Activated CD4-positive, alpha-beta T cell treated with anti-CD3 and anti-CD28 coated beads, Interleukin-2, amount 10 ng/mL, durations not matched to agents 7 days and 5 days (primary cell): ENCODE measurements at regions of chr2 and their contacts with region 1.

Region 1: DNA sequence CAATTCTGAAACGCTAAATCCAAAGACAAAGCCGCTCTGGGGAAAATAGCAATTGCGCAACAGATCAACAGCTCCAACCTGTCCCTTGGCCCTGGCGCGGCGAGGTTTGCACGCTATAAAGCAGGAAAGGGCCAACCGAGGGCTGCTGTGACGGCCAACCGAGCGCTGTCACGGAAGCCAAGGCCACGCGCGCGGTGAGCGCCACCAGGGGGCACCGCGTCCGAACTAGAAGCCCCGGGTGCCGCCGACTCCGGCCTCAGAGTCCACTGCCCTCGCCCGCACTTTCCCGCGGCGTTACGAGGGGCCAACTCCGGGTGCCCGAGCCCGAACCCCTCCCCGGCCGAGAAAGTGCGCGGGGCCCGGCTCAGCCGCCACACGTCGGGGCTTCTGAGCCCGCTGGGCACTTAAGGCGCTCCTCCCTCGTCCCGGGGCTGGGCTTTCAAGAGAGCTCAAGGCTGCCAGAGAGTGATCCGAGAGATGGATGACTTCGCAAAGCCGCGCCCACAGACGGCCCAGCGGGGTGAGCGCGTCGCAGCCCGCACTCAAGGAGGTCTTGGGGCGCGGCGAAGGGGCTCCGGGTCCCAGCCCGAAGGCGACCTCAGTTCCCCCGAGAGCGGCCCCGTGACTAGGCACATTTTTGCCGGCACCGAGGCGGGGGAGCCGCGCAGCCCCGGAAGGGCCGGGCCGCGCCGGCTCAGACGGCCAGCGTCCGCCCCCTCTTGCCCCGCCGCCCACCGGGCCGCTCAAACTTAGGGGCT is 897 bp downstream of the NFE2L2 start:
- DNase-seq: peak; percentile 93
- H3K4me3 Mint-ChIP-seq: peak overlapping the region; percentile 91
- H3K27ac Mint-ChIP-seq: peak overlapping the region; percentile 97
- H3K4me1 Mint-ChIP-seq: peaks cover 57% of the 10 kb centered on the region
- H3K27me3 Mint-ChIP-seq: no peaks in the 10 kb centered on the region

Region 2: DNA sequence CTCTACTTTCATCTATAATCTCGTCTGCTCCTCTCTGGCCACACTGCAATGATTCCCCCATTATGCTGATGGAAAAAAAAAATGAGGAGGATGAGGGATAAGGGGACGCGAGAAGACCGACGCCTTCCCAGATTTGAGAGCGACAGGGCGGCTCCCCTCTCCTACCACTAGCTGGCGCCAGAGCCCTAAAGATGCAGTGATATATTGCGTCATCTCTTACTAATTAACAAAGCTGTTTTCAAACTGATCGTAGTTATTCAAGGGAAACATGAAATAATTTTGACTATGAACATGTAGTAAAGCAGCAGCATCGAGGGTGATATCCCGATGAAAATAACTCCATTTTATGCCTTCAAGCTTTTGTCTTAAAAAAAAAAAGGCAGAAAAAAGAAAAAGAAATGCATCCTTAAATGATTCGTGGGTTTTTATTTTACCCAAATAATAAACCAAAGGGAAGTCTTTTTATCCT is 99.0 kb before region 1 on chr2:
- CTCF ChIA-PET with region 1: interaction called, 40 read pairs
- POLR2A ChIA-PET with region 1: interaction called, 10 read pairs
- DNase-seq: peak; percentile 85
- H3K4me3 Mint-ChIP-seq: no peak overlapping the region
- H3K27ac Mint-ChIP-seq: no peak overlapping the region
- H3K4me1 Mint-ChIP-seq: peaks cover 34% of the 10 kb centered on the region
- H3K27me3 Mint-ChIP-seq: peaks cover 8% of the 10 kb centered on the region

Region 3: GRCh38 chr2:177229448-177230242 is 34.0 kb before region 1 on chr2:
- CTCF ChIA-PET with region 1: interaction called, 16 read pairs
- POLR2A ChIA-PET with region 1: no interaction called
- DNase-seq: no peak
- H3K4me3 Mint-ChIP-seq: no peak overlapping the region
- H3K27ac Mint-ChIP-seq: peak overlapping the region; percentile 34
- H3K4me1 Mint-ChIP-seq: peaks cover 18% of the 10 kb centered on the region
- H3K27me3 Mint-ChIP-seq: no peaks in the 10 kb centered on the region

Region 4: GRCh38 chr2:177281400-177282180 is 18.0 kb after region 1 on chr2:
- CTCF ChIA-PET with region 1: interaction called, 74 read pairs
- POLR2A ChIA-PET with region 1: interaction called, 3 read pairs
- DNase-seq: no peak
- H3K4me3 Mint-ChIP-seq: no peak overlapping the region
- H3K27ac Mint-ChIP-seq: no peak overlapping the region
- H3K4me1 Mint-ChIP-seq: peaks cover 24% of the 10 kb centered on the region
- H3K27me3 Mint-ChIP-seq: no peaks in the 10 kb centered on the region

Region 5: GRCh38 chr2:177296040-177296439 is 32.4 kb after region 1 on chr2:
- CTCF ChIA-PET with region 1: interaction called, 10 read pairs
- POLR2A ChIA-PET with region 1: interaction called, 15 read pairs
- DNase-seq: no peak
- H3K4me3 Mint-ChIP-seq: no peak overlapping the region
- H3K27ac Mint-ChIP-seq: no peak overlapping the region
- H3K4me1 Mint-ChIP-seq: peaks cover 52% of the 10 kb centered on the region
- H3K27me3 Mint-ChIP-seq: no peaks in the 10 kb centered on the region

Region 6: DNA sequence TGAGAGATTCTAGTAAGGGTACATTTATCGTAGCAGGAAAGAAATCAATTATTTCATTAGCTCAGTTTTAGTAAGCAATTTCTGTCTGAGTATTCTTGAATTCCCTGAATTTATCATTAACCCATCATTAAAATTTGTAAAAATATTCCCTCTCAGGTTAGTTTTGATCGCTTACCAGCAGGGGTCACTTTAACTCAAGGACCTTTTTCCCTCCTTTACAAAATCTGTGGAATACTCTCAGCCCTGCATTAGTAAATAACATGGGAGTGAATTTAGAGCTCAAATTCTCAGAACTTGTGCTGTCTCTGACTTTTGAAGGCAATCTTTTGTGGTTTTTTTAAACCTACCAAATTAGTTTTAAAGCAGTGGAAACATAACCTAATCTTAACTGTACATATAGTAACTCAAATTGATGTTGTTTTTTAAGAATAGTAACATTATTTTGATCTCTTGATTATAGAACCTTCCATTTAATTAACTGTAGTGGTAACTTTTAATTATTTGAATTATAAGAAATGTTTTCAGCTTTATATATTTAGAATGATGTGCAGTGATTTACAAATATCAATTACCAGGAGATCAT is 226.2 kb after region 1 on chr2:
- CTCF ChIA-PET with region 1: no interaction called
- POLR2A ChIA-PET with region 1: no interaction called
- DNase-seq: no peak
- H3K4me3 Mint-ChIP-seq: no peak overlapping the region
- H3K27ac Mint-ChIP-seq: no peak overlapping the region
- H3K4me1 Mint-ChIP-seq: no peaks in the 10 kb centered on the region
- H3K27me3 Mint-ChIP-seq: no peaks in the 10 kb centered on the region